Activated CD8-positive, alpha-beta T cell treated with anti-CD3 and anti-CD28 coated beads, Interleukin-2, amount 10 ng/mL, durations not matched to agents 7 days and 5 days (primary cell): ENCODE measurements at regions of chr4 and their contacts with region 1.

Region 1: DNA sequence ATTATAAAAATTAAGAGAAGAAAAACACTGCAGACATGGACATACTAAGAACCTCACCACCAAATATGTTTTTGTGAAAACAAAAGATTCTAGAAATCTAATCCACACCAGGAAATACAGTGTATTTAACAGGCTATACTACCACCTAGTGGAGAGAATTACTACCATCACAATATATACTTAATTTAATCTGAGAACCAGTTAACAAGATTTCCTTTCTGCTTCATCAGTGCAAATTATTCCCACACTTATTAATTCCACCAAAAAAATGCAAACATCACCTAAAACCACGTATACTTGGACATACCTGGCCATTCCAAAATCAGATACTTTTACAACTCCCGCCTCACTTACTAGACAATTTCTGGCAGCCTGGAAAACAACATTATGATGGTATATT is 7.0 kb upstream of the TXK start:
- DNase-seq: no peak
- ATAC-seq: no peak
- H3K4me3 Mint-ChIP-seq: no peak overlapping the region
- H3K27ac Mint-ChIP-seq: no peak overlapping the region
- H3K4me1 Mint-ChIP-seq: peaks cover 49% of the 10 kb centered on the region
- H3K27me3 Mint-ChIP-seq: no peaks in the 10 kb centered on the region

Region 2: GRCh38 chr4:48093949-48094550 is 47.0 kb before region 1 on chr4:
- CTCF ChIA-PET with region 1: interaction called, 11 read pairs
- POLR2A ChIA-PET with region 1: no interaction called
- DNase-seq: no peak
- ATAC-seq: no peak
- H3K4me3 Mint-ChIP-seq: no peak overlapping the region
- H3K27ac Mint-ChIP-seq: no peak overlapping the region
- H3K4me1 Mint-ChIP-seq: no peaks in the 10 kb centered on the region
- H3K27me3 Mint-ChIP-seq: no peaks in the 10 kb centered on the region

Region 3: DNA sequence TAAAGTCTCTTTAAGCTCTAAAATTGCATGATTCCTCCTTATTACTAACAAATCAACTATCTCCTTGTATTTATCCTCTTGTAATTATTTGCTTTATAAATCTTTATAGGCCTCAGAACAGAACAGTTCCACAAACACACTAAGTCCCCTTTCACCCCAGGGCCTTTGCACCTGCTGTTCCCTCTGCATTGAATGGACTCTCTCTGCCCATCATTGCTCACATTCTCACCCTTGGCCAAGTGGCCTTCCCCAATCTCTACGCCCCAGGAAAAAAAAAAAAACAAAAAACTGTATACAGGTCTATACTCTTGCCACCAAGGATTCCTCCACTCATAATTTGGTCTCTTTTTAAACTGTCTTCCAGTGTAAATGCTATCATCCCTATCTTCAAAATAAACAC is 74.9 kb after region 1 on chr4:
- CTCF ChIA-PET with region 1: no interaction called
- POLR2A ChIA-PET with region 1: no interaction called
- DNase-seq: no peak
- ATAC-seq: no peak
- H3K4me3 Mint-ChIP-seq: no peak overlapping the region
- H3K27ac Mint-ChIP-seq: no peak overlapping the region
- H3K4me1 Mint-ChIP-seq: peaks cover 19% of the 10 kb centered on the region
- H3K27me3 Mint-ChIP-seq: no peaks in the 10 kb centered on the region

Region 4: GRCh38 chr4:48227659-48228058 is 86.6 kb after region 1 on chr4:
- CTCF ChIA-PET with region 1: no interaction called
- POLR2A ChIA-PET with region 1: no interaction called
- DNase-seq: peak; percentile 38
- ATAC-seq: peak; percentile 47
- H3K4me3 Mint-ChIP-seq: no peak overlapping the region
- H3K27ac Mint-ChIP-seq: no peak overlapping the region
- H3K4me1 Mint-ChIP-seq: peaks cover 14% of the 10 kb centered on the region
- H3K27me3 Mint-ChIP-seq: no peaks in the 10 kb centered on the region

Region 5: DNA sequence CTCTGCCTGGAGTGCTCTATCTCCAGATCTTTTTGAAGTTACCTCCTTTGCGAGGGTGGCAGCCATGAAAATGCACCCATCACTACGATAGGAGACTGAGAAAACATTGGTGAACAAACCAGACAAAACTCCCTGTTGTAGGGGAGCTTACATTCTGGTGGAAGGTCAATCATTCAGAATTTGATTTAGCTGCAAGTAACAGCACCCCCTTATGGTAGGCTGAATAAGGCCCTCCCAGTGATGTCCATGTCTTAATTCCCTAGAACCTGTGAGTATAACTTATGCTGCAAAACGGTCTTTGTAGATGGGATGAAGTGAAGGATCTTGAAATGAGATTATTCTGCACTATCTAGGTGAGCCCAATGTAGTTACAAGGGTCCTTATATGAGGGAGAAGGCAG is 134.2 kb after region 1 on chr4:
- CTCF ChIA-PET with region 1: interaction called, 15 read pairs
- POLR2A ChIA-PET with region 1: no interaction called
- DNase-seq: peak; percentile 25
- ATAC-seq: peak; percentile 33
- H3K4me3 Mint-ChIP-seq: no peak overlapping the region
- H3K27ac Mint-ChIP-seq: no peak overlapping the region
- H3K4me1 Mint-ChIP-seq: peaks cover 15% of the 10 kb centered on the region
- H3K27me3 Mint-ChIP-seq: no peaks in the 10 kb centered on the region